Mucosa of descending colon (tissue), 3 donors: ENCODE measurements at regions of chr9 and their contacts with region 1.

Region 1: GRCh38 chr9:122464633-122465567 is 12.8 kb downstream of the OR1J1 start:
- DNase-seq: peak in 2 of 3 donors; percentile 57 to 86
- ATAC-seq: peak; percentile 93
- H3K4me3 ChIP-seq: no peak overlapping the region
- H3K4me1 ChIP-seq: peaks cover 10% of the 10 kb centered on the region
- CTCF ChIP-seq: peak; percentile 47

Region 2: GRCh38 chr9:122307061-122307460 is 157.8 kb before region 1 on chr9:
- intact Hi-C with region 1: no loop called
- DNase-seq: no peak
- ATAC-seq: no peak
- H3K4me3 ChIP-seq: no peak overlapping the region
- H3K4me1 ChIP-seq: no peaks in the 10 kb centered on the region
- CTCF ChIP-seq: no peak

Region 3: DNA sequence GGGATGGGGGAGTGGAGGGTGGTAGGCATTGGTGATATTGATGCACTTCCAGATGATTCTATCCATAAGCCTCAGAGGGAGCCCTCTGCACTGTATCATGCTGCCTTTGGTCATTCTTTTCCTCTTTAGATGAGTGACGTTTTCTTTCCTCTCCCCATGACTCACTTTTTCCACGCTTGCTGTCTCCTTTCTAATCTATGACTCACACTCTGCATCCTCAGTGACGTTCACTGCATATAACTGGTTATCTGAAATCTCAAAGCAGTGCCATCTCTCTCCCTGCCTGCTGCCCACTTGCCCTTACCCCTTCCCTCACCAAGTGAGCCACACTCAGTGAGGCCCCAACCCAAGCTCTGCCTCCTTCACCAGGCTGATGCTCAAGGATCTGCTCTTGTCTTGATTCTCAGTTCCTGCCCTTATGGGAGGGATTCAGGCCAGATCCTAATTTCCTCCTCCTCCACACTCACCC is 62.5 kb before region 1 on chr9:
- intact Hi-C with region 1: no loop called
- DNase-seq: no peak
- ATAC-seq: peak; percentile 54
- H3K4me3 ChIP-seq: no peak overlapping the region
- H3K4me1 ChIP-seq: no peaks in the 10 kb centered on the region
- CTCF ChIP-seq: no peak

Region 4: DNA sequence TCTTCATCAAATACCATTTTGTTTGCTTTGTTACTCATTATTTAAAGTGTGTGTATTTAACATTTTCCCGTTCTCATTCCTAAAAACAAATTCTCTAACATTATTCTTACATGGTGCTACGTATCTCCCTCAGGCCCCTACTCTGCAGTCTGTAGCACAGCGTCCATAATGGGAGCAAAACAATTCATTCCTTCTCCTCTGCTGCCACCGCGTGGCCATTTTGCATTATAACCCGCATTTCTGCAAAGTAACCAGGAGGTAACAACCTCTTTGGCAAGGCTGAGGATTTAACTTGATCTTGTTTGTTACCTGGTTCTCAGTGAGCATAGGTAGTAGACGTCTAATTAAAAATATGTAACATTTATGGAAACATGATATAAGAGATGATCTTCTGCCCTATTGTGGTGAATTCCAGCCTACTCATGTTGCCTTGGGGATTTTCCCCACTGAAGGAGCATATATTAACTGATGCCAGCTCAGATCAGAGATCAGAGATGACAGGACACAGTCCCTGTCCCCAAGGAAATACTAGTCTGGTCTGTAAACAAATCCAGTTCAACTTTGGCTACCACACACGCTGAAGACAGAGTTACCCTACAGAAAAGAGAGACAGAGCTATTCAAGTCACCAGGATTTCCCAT is 345.5 kb after region 1 on chr9:
- intact Hi-C with region 1: loop called (anchors 5 kb)
- DNase-seq: peak in 2 of 3 donors; percentile 70 to 75
- ATAC-seq: peak; percentile 96
- H3K4me3 ChIP-seq: no peak overlapping the region
- H3K4me1 ChIP-seq: peaks cover 6% of the 10 kb centered on the region
- CTCF ChIP-seq: peak; percentile 63